ENCODE measurements at regions of chr14 and their contacts with region 1.

Region 1: GRCh38 chr14:106665814-106666213 is 1139.4 kb downstream of the TMEM121 start:
- DNase-seq: no peak
- H3K4me3 ChIP-seq: no peak overlapping the region
- H3K4me3 Mint-ChIP-seq: peak overlapping the region in 2 of 8 donors; percentile 39 to 49
- H3K27ac ChIP-seq: no peak overlapping the region
- H3K27ac Mint-ChIP-seq: no peak overlapping the region
- H3K4me1 ChIP-seq: peaks cover 7% of the 10 kb centered on the region
- H3K4me1 Mint-ChIP-seq: peaks cover 9 to 21% (median 14%) of the 10 kb centered on the region in 4 donors
- H3K27me3 ChIP-seq: no peaks in the 10 kb centered on the region
- H3K27me3 Mint-ChIP-seq: peaks cover 6 to 11% of the 10 kb centered on the region in 2 donors

Region 2: GRCh38 chr14:106681568-106681967 is 15.8 kb after region 1 on chr14:
- CTCF ChIA-PET with region 1: interaction called, 23 read pairs
- POLR2A ChIA-PET with region 1: no interaction called
- intact Hi-C with region 1: no loop called
- DNase-seq: no peak
- H3K4me3 ChIP-seq: no peak overlapping the region
- H3K4me3 Mint-ChIP-seq: no peak overlapping the region
- H3K27ac ChIP-seq: no peak overlapping the region
- H3K27ac Mint-ChIP-seq: no peak overlapping the region
- H3K4me1 ChIP-seq: no peaks in the 10 kb centered on the region
- H3K4me1 Mint-ChIP-seq: no peaks in the 10 kb centered on the region
- H3K27me3 ChIP-seq: no peaks in the 10 kb centered on the region
- H3K27me3 Mint-ChIP-seq: peaks cover 15 to 32% of the 10 kb centered on the region in 2 donors

Region 3: DNA sequence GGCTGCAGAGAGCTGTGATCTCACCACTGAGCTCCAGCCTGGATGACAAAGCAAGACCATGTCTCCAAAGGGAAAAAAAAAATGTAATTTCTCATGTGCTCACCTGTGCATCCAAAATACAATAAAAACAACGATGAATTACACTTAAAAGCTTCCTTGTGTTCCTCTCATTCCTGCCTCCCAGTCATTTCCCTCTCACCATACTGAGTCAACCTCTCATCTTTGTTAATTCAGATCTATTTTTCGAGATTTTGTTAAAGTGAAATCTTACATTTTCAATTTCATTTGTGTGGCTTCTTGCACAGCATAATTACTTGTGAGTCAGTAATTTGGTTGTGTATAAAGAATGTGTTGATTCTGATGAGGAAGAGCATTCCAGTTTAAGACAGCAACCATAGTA is 63.7 kb after region 1 on chr14:
- CTCF ChIA-PET with region 1: no interaction called
- POLR2A ChIA-PET with region 1: no interaction called
- intact Hi-C with region 1: loop called (anchors 5 kb)
- DNase-seq: no peak
- H3K4me3 ChIP-seq: no peak overlapping the region
- H3K4me3 Mint-ChIP-seq: no peak overlapping the region
- H3K27ac ChIP-seq: no peak overlapping the region
- H3K27ac Mint-ChIP-seq: no peak overlapping the region
- H3K4me1 ChIP-seq: peaks cover 10% of the 10 kb centered on the region
- H3K4me1 Mint-ChIP-seq: peaks cover 0 to 33% (median 2%) of the 10 kb centered on the region in 4 donors
- H3K27me3 ChIP-seq: no peaks in the 10 kb centered on the region
- H3K27me3 Mint-ChIP-seq: no peaks in the 10 kb centered on the region

Region 4: DNA sequence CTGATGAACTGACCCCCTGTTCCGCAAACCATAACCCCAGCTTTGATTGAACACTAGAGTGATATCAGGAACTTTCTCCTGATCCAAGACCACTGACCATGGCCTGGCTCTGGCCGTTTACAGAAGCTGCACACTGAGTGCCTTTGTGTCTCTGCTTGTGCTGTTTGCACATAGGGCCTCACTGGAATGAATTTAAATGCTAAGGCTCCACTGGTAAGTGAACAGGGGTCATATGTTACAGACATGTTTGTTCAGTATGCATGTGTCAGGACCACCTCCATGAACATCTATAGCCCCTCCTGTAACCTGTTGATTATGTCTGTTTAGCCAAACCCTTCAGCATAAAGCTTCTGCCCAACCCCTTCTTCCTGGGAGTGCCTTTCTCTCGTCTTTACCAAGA is 100.3 kb after region 1 on chr14:
- CTCF ChIA-PET with region 1: interaction called, 6 read pairs
- POLR2A ChIA-PET with region 1: no interaction called
- intact Hi-C with region 1: loop called (anchors 2 kb)
- DNase-seq: no peak
- H3K4me3 ChIP-seq: no peak overlapping the region
- H3K4me3 Mint-ChIP-seq: peak overlapping the region in 2 of 8 donors; percentile 74 to 77
- H3K27ac ChIP-seq: no peak overlapping the region
- H3K27ac Mint-ChIP-seq: peak overlapping the region in 4 of 7 donors; percentile 22 to 82 (median 65)
- H3K4me1 ChIP-seq: peaks cover 34% of the 10 kb centered on the region
- H3K4me1 Mint-ChIP-seq: peaks cover 29 to 56% (median 39%) of the 10 kb centered on the region in 4 donors
- H3K27me3 ChIP-seq: no peaks in the 10 kb centered on the region
- H3K27me3 Mint-ChIP-seq: peaks cover 0 to 1% of the 10 kb centered on the region in 2 donors